Naive thymus-derived CD4-positive, alpha-beta T cell (primary cell): ENCODE measurements at regions of chr13 and their contacts with region 1.

Region 1: DNA sequence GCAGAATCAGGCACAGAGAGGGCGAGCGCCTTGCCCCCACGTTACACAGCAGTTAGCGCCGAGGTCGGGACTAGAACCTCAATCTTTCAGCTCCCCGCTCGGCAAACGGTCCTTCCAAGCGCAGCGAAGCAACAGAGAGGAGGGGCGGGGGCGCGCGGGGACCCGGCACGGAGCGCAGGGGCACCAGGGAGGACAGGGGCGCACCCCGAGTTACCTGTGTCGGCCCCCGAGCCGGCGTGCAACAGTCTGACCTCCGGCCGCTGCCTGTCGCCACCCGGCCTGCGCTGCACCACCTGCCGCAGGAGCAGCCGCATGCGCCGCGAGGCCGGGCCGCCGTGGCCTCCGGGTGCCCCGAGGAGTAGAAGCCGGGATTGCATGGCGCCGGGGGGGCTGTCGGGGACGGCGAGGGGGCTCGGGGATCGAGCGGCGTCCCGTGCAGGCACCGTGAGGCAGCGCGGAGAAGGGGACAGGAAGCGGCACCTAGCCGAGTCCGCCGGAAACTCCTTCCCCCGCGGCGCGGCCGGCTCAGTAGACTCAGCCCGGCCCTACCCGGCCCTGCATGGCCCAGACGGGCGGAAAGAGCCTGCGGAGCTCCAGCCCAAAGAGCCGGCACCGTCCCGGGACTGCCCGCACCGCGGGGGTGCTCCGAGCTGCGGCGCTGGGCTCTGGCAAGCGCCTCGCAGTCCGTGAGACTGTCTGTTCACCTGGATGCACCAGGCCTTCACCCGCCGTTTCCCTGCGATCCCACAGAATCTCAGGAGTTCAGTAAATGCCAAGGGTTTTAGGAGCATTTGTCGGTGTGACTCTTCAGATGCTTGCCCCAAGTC is at the start of gene VWA8:
- DNase-seq: peak; percentile 75 to 86 (median 84)
- ATAC-seq: peak; percentile 97
- H3K4me3 ChIP-seq: peak within 1 kb of the TSS; percentile 86
- H3K4me3 Mint-ChIP-seq: peak within 1 kb of the TSS; percentile 92 to 97 (median 94)
- H3K27ac ChIP-seq: peak within 1 kb of the TSS; percentile 84
- H3K27ac Mint-ChIP-seq: peak within 1 kb of the TSS; percentile 88 to 99 (median 95)
- H3K4me1 ChIP-seq: peaks cover 14 to 16% of the 10 kb centered on the region in 2 donors
- H3K4me1 Mint-ChIP-seq: peaks cover 19 to 63% (median 43%) of the 10 kb centered on the region in 7 donors
- H3K27me3 ChIP-seq: no peaks in the 10 kb centered on the region
- H3K27me3 Mint-ChIP-seq: peaks cover 0 to 2% (median 0%) of the 10 kb centered on the region in 5 donors
- total RNA-seq, gene VWA8: 16.8 to 26.3 (median 21.8) TPM

Region 2: DNA sequence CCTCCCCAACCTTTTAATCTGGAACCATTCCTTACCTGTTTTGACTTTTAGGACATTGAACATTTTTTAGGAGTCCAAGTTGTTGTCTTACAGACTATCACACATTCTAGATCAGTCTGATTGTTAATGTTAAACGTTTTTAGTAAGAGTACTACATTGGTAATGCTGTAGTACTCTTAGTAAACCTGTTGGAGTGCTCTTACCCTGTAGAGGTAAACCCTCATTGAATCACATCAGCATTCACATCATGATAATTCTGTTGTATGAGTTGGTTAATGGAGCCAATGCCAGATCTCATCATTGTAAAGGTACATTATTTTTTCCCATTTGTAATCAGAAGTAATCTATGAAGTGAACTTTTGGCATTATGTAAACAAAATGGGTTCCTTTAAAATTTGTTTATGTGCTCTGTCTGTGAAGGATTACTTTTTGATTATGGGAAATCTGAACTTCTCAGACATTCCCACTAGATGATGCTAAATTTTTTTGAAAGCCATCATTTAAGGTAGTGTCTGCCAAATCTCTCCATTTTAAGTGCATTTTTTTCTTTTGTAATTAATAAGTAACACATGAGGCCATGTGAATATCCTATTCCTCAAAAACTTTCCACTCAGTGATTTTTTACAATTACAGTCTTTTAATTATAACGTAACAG is 55.1 kb before region 1 on chr13:
- CTCF ChIA-PET with region 1: no interaction called
- POLR2A ChIA-PET with region 1: no interaction called
- intact Hi-C with region 1: loop called in 1 of 2 experiments (anchors 1 kb)
- DNase-seq: peak in 6 of 9 donors; percentile 6 to 45 (median 26)
- ATAC-seq: peak; percentile 92
- H3K4me3 ChIP-seq: no peak overlapping the region
- H3K4me3 Mint-ChIP-seq: no peak overlapping the region
- H3K27ac ChIP-seq: no peak overlapping the region
- H3K27ac Mint-ChIP-seq: no peak overlapping the region
- H3K4me1 ChIP-seq: no peaks in the 10 kb centered on the region
- H3K4me1 Mint-ChIP-seq: peaks cover 0 to 12% (median 3%) of the 10 kb centered on the region in 7 donors
- H3K27me3 ChIP-seq: no peaks in the 10 kb centered on the region
- H3K27me3 Mint-ChIP-seq: no peaks in the 10 kb centered on the region

Region 3: GRCh38 chr13:41916173-41916954 is 44.5 kb before region 1 on chr13:
- CTCF ChIA-PET with region 1: no interaction called
- POLR2A ChIA-PET with region 1: interaction called, 3 read pairs
- intact Hi-C with region 1: loop called (anchors 1 to 2 kb)
- DNase-seq: peak in 5 of 9 donors; percentile 15 to 47 (median 30)
- ATAC-seq: peak; percentile 76
- H3K4me3 ChIP-seq: no peak overlapping the region
- H3K4me3 Mint-ChIP-seq: peak overlapping the region in 9 of 10 donors; percentile 26 to 81 (median 57)
- H3K27ac ChIP-seq: no peak overlapping the region
- H3K27ac Mint-ChIP-seq: peak overlapping the region in 7 of 9 donors; percentile 0 to 87 (median 47)
- H3K4me1 ChIP-seq: peaks cover 11 to 15% of the 10 kb centered on the region in 2 donors
- H3K4me1 Mint-ChIP-seq: peaks cover 26 to 65% (median 44%) of the 10 kb centered on the region in 7 donors
- H3K27me3 ChIP-seq: no peaks in the 10 kb centered on the region
- H3K27me3 Mint-ChIP-seq: no peaks in the 10 kb centered on the region

Region 4: GRCh38 chr13:42048682-42049453 is 88.0 kb after region 1 on chr13:
- CTCF ChIA-PET with region 1: no interaction called
- POLR2A ChIA-PET with region 1: interaction called, 12 read pairs
- intact Hi-C with region 1: loop called (anchors 2 kb)
- DNase-seq: peak; percentile 20 to 81 (median 43)
- ATAC-seq: peak; percentile 81
- H3K4me3 ChIP-seq: peak overlapping the region; percentile 84
- H3K4me3 Mint-ChIP-seq: peak overlapping the region; percentile 83 to 96 (median 92)
- H3K27ac ChIP-seq: peak overlapping the region; percentile 67
- H3K27ac Mint-ChIP-seq: peak overlapping the region in 2 of 9 donors; percentile 74 to 78
- H3K4me1 ChIP-seq: peaks cover 5 to 9% of the 10 kb centered on the region in 2 donors
- H3K4me1 Mint-ChIP-seq: peaks cover 6 to 38% (median 15%) of the 10 kb centered on the region in 7 donors
- H3K27me3 ChIP-seq: no peaks in the 10 kb centered on the region
- H3K27me3 Mint-ChIP-seq: peaks cover 0 to 15% (median 0%) of the 10 kb centered on the region in 5 donors

Region 5: DNA sequence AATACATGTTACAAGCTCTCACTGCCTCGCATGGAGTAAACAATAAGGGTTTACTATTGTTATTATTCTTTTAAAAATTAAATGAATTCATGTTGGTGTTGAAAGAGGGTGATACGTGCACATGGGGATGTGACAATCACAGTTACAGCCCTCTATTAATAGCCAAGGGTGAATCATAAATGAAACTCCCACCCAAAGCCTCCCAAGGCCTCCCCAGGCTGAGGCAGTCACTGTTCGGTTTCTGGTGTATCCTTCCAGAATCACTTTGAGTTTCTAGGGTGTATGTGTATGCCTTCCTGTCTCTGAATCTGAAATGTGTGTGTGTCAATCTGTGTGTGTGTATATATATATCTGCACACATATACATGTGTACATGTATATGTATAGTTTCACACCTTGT is 384.5 kb after region 1 on chr13:
- CTCF ChIA-PET with region 1: no interaction called
- POLR2A ChIA-PET with region 1: no interaction called
- intact Hi-C with region 1: no loop called
- DNase-seq: no peak
- ATAC-seq: no peak
- H3K4me3 ChIP-seq: no peak overlapping the region
- H3K4me3 Mint-ChIP-seq: no peak overlapping the region
- H3K27ac ChIP-seq: no peak overlapping the region
- H3K27ac Mint-ChIP-seq: no peak overlapping the region
- H3K4me1 ChIP-seq: no peaks in the 10 kb centered on the region
- H3K4me1 Mint-ChIP-seq: peaks cover 0 to 28% (median 18%) of the 10 kb centered on the region in 7 donors
- H3K27me3 ChIP-seq: no peaks in the 10 kb centered on the region
- H3K27me3 Mint-ChIP-seq: no peaks in the 10 kb centered on the region